Left colon (tissue), 2 donors: ENCODE measurements at regions of chr15 and their contacts with region 1.

Region 1: DNA sequence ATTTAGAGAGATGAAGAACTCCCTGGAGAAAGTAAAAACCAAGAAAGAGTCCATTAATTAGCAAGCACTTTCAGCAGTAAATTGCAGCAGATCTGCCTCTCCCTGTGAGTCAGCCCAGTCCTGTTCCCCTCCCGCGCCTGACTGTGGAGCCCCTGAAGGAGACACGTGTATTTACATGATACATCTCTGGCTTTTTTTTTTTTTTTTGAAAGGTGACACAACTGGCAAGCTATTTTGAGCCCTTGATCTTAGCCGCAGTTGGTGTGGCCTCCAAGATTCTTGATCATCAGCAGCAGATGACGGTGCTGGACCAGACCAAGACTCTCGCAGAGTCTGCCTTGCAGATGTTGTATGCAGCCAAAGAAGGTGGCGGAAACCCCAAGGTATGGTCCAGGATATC is 271.8 kb upstream of the TPM1 start:
- DNase-seq: no peak
- ATAC-seq: no peak

Region 2: GRCh38 chr15:62847900-62848489 is 77.2 kb after region 1 on chr15:
- intact Hi-C with region 1: loop called in 1 of 2 experiments (anchors 10 kb)
- DNase-seq: peak; percentile 74 to 87
- ATAC-seq: peak; percentile 73